Ovary (tissue), 10 donors: ENCODE measurements at regions of chr1 and their contacts with region 1.

Region 1: DNA sequence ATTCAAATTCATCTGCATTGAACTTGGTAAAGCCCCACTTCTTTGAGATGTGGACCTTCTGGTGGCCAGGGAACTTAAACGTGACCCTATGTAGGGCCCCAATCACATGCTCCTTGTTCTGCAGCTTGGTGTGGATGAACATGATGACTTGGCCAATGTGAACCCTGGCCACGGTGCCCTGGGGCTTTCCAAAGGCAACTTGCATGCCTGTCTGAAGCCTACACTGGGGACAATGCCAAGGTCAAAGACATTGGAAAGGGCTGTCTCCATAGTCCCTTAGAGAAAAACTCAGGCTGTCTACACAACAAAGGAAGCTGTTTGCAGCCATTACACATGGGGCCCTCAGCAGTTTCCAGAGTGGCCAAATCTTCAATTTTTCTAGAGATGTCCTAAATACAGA is 8.9 kb upstream of the VPS13D start:
- DNase-seq: no peak
- H3K4me3 ChIP-seq: no peak overlapping the region
- H3K27ac ChIP-seq: no peak overlapping the region
- H3K4me1 ChIP-seq: no peaks in the 10 kb centered on the region
- H3K27me3 ChIP-seq: no peaks in the 10 kb centered on the region
- CTCF ChIP-seq: no peak
- EP300 ChIP-seq: no peak
- POLR2A ChIP-seq: no peak

Region 2: GRCh38 chr1:12246584-12246983 is 25.7 kb after region 1 on chr1:
- intact Hi-C with region 1: loop called in 1 of 4 experiments (anchors 1 kb)
- DNase-seq: no peak
- H3K4me3 ChIP-seq: no peak overlapping the region
- H3K27ac ChIP-seq: no peak overlapping the region
- H3K4me1 ChIP-seq: no peaks in the 10 kb centered on the region
- H3K27me3 ChIP-seq: no peaks in the 10 kb centered on the region
- CTCF ChIP-seq: no peak
- EP300 ChIP-seq: no peak
- POLR2A ChIP-seq: no peak